Adrenal gland (tissue), 19 donors: ENCODE measurements at regions of chr12 and their contacts with region 1.

Region 1: DNA sequence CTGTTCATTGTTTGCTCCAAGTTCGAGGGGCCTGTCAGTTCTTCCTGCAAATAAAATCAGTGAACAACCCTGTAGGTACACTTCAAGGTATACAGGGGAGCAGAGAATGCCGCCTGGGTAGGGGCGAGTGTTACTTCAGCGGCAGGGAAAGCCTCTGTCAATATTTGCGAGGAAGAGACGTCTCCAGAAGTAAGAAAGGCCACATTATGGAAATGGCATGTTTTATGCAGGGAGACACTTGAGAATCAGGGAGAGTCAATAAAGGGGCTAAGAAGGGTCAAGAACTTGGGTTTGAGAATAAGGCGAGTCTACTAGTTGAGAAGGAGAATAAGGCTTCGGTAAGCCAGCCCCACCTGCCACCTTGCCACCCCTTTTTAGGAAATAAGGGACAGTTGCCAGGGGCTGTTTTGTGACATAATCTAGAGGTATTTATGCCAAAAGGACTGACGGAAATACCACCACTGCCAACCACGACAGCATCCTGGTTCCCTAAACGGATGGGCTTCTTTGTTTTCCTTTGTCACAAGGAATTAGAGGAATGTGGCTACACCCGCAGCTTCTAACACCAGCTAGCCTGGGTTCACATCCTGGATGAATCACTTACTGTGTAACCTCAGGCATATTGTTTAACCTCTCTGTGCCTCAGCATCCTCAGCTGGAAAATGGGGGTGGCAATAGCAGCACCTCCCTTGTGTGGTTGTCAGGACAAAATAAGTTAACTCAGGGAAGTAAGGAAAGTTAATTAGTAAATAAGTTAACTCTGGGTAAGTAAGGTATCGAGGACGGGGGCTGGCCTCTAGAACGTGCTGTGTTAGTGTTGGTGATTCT is 67.7 kb downstream of the EID3 start:
- DNase-seq: peak in 2 of 7 donors; percentile 16 to 31
- H3K4me3 ChIP-seq: no peak overlapping the region
- H3K27ac ChIP-seq: no peak overlapping the region
- H3K4me1 ChIP-seq: no peaks in the 10 kb centered on the region
- H3K27me3 ChIP-seq: no peaks in the 10 kb centered on the region
- CTCF ChIP-seq: no peak
- POLR2A ChIP-seq: no peak

Region 2: GRCh38 chr12:104865080-104865479 is 493.8 kb after region 1 on chr12:
- intact Hi-C with region 1: loop called in 1 of 2 experiments (anchors 10 kb)
- DNase-seq: no peak
- H3K4me3 ChIP-seq: no peak overlapping the region
- H3K27ac ChIP-seq: no peak overlapping the region
- H3K4me1 ChIP-seq: peaks cover 10 to 20% of the 10 kb centered on the region in 2 donors
- H3K27me3 ChIP-seq: no peaks in the 10 kb centered on the region
- CTCF ChIP-seq: no peak
- POLR2A ChIP-seq: no peak

Region 3: GRCh38 chr12:105053116-105053572 is 681.9 kb after region 1 on chr12:
- intact Hi-C with region 1: loop called in 1 of 2 experiments (anchors 10 kb)
- DNase-seq: peak; percentile 69 to 96 (median 82)
- H3K4me3 ChIP-seq: no peak overlapping the region
- H3K27ac ChIP-seq: no peak overlapping the region
- H3K4me1 ChIP-seq: peaks cover 0 to 7% of the 10 kb centered on the region in 2 donors
- H3K27me3 ChIP-seq: no peaks in the 10 kb centered on the region
- CTCF ChIP-seq: peak; percentile 90 to 96 (median 92)
- POLR2A ChIP-seq: no peak